ENCODE measurements at regions of chr1 and their contacts with region 1.

Region 1: DNA sequence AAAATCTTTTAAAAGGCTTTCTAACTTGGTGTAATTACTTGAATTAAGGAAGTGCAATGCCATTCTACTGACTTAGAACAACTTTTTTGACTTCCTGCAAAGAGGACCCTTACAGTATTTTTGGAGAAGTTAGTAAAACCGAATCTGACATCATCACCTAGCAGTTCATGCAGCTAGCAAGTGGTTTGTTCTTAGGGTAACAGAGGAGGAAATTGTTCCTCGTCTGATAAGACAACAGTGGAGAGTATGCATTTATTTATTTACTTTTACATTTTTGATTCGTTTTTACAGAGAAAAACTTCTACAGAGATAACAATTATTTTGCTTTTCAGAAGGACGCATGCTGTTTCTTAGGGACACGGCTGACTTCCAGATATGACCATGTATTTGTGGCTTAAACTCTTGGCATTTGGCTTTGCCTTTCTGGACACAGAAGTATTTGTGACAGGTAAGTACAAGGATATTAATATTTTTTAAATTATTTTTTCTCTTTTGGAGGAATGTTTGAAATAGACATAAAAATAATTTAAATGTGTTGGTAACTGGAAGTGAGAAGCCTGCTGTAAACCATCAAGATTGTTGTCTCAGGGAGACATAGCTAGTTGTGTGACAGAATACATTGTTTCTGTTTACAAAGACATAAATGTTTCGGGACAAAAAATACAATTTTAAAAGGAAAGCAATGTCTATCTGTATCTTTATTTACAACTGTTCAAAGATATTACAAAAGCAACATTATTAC is at the start of gene PTPRC:
- DNase-seq: peak; percentile 74
- ATAC-seq: peak; percentile 82
- H3K4me3 ChIP-seq: peak within 1 kb of the TSS; percentile 69
- H3K27ac ChIP-seq: peak within 1 kb of the TSS; percentile 68
- H3K4me1 ChIP-seq: peaks cover 13% of the 10 kb centered on the region
- H3K27me3 ChIP-seq: no peaks in the 10 kb centered on the region
- CTCF ChIP-seq: no peak
- EP300 ChIP-seq: peak in 1 of 2 experiments; percentile 75; a peak in 2 of 4 replicates
- POLR2A ChIP-seq: no peak
- RAD21 ChIP-seq: peak; percentile 24; the same call in 1 of the 2 replicates
- polyA plus RNA-seq, gene PTPRC: 72.9 to 73.6 TPM

Region 2: DNA sequence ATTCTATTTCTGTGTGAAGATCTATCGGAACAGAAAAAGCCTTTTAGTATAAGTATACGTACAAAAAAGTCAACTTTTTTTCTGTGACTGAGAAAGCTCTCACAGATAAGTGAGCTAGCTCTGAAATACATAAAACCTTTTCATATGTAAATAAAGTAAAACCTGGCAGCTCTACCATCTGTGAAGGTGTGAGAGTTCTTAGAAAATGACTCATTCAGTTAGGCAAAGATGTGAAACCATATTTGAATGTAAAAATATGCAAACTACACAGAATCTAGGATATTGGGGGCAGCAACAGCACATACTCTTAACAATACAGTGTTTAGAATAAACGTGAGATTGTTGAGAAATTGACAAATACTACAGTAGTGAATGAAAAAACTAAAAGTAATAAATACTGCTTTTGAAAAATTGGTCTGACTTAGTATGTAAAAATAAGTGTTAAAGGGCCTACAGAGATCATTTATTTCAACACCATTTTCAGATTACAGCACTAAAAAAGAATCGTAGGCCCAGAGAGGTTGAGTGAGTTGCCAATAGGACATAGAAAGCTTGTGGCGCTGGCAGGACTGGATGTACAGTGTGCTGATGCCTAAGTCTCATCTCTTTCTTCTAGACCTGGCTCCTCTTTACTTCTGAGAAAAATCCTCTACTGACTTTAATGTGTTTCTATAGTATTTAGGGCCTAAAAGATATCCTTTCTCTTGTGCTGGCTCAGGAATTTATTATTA is 118.4 kb before region 1 on chr1:
- CTCF ChIA-PET with region 1: interaction called, 4 read pairs
- POLR2A ChIA-PET with region 1: no interaction called
- RAD21 ChIA-PET with region 1: no interaction called
- SMC1A ChIA-PET with region 1: interaction called, 17 read pairs
- in situ Hi-C with region 1: no loop called
- intact Hi-C with region 1: no loop called
- DNase-seq: peak; percentile 55
- ATAC-seq: peak; percentile 91
- H3K4me3 ChIP-seq: no peak overlapping the region
- H3K27ac ChIP-seq: no peak overlapping the region
- H3K4me1 ChIP-seq: peaks cover 18% of the 10 kb centered on the region
- H3K27me3 ChIP-seq: no peaks in the 10 kb centered on the region; a peak in 1 of 4 replicates
- CTCF ChIP-seq: no peak
- EP300 ChIP-seq: peak in 1 of 2 experiments; percentile 71; a peak in 2 of 4 replicates
- POLR2A ChIP-seq: no peak
- RAD21 ChIP-seq: no peak

Region 3: DNA sequence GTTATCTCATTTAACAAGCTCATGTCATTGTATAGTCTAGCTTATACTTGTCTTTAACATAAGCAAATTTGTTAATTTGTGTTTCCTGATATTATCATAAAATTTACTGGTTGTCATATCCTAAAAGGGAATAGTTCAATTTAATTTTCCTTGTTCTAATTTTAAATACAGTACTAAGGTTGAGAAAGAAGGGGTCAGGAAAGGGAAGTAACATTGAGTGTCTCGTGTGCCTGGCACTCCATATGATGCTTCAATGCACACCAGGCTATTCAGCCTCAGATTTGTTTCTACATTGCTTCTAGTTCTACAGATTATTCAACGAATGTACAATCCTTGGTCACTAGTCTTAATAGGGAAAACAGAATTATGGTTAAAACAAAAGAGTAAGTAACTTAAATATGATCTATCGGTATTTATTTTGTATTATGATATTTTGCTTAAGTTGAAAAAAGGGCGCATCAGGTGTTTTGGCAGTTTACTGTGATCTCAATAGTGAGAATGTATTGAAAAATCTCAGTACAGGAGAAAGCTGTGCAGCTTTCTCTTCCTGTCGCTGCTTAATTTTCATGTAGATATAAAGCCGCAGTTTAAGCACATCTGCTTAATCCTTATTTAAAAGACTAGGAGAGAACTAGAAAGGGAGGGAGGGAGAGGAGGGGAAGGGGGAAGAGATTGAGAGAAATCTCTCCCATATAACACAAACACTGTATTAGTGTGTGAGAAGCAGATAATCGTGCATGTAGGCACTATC is 12.8 kb after region 1 on chr1:
- CTCF ChIA-PET with region 1: interaction called, 6 read pairs
- POLR2A ChIA-PET with region 1: interaction called, 11 read pairs
- RAD21 ChIA-PET with region 1: interaction called, 13 read pairs
- SMC1A ChIA-PET with region 1: interaction called, 44 read pairs
- in situ Hi-C with region 1: no loop called
- intact Hi-C with region 1: no loop called
- DNase-seq: no peak
- ATAC-seq: peak; percentile 29
- H3K4me3 ChIP-seq: no peak overlapping the region
- H3K27ac ChIP-seq: peak overlapping the region; percentile 20; the same call in 1 of the 2 replicates
- H3K4me1 ChIP-seq: peaks cover 32% of the 10 kb centered on the region
- H3K27me3 ChIP-seq: no peaks in the 10 kb centered on the region
- CTCF ChIP-seq: no peak
- EP300 ChIP-seq: no peak
- POLR2A ChIP-seq: no peak
- RAD21 ChIP-seq: no peak

Region 4: GRCh38 chr1:198657550-198658064 is 18.5 kb after region 1 on chr1:
- CTCF ChIA-PET with region 1: interaction called, 3 read pairs
- POLR2A ChIA-PET with region 1: interaction called, 4 read pairs
- RAD21 ChIA-PET with region 1: interaction called, 8 read pairs
- SMC1A ChIA-PET with region 1: interaction called, 44 read pairs
- in situ Hi-C with region 1: no loop called
- intact Hi-C with region 1: no loop called
- DNase-seq: no peak
- ATAC-seq: peak; percentile 18
- H3K4me3 ChIP-seq: peak overlapping the region; percentile 9; the same call in 1 of the 2 replicates
- H3K27ac ChIP-seq: peak overlapping the region; percentile 74
- H3K4me1 ChIP-seq: peaks cover 32% of the 10 kb centered on the region
- H3K27me3 ChIP-seq: no peaks in the 10 kb centered on the region
- CTCF ChIP-seq: no peak
- EP300 ChIP-seq: no peak
- POLR2A ChIP-seq: no peak
- RAD21 ChIP-seq: no peak

Region 5: DNA sequence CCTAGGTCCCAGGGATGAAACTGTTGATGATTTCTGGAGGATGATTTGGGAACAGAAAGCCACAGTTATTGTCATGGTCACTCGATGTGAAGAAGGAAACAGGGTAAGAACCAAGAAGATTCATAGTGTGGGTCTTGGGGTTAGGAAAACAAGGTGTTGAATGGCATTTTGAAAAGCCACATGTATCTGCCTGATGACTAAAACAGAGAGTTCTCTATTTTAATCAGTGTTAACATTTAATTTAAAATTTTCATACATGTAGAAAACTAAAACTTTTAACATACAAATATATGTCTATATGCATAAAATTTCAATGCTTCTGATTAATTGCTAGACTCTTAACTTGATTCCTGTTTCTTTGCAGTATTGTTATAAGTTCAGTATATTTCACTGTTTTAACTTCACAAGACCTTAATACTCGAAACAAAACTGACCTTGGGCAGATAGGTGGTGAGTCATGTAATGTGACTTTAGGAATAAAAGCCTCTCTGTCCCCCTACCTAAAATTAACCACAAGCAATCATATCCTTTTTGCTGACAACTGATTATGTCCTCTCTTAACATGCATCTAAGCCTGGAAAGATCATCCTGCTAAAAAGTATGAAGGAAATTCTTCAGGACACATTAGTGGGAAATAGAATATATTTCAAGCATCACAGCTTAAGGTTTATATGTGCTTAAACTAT is 95.4 kb after region 1 on chr1:
- CTCF ChIA-PET with region 1: no interaction called
- POLR2A ChIA-PET with region 1: no interaction called
- RAD21 ChIA-PET with region 1: no interaction called
- SMC1A ChIA-PET with region 1: no interaction called
- in situ Hi-C with region 1: no loop called
- intact Hi-C with region 1: loop called (anchors 5 kb)
- DNase-seq: peak; percentile 39
- ATAC-seq: peak; percentile 95
- H3K4me3 ChIP-seq: no peak overlapping the region
- H3K27ac ChIP-seq: peak overlapping the region; percentile 51; the same call in 1 of the 2 replicates
- H3K4me1 ChIP-seq: peaks cover 9% of the 10 kb centered on the region
- H3K27me3 ChIP-seq: no peaks in the 10 kb centered on the region
- CTCF ChIP-seq: no peak
- EP300 ChIP-seq: peak; percentile 63 to 73; a peak in 3 of 4 replicates
- POLR2A ChIP-seq: no peak
- RAD21 ChIP-seq: no peak